ENCODE measurements at regions of chr17 and their contacts with region 1.

Region 1: GRCh38 chr17:38702166-38702899 is 2.7 kb upstream of the MLLT6 start:
- DNase-seq: peak; percentile 85
- ATAC-seq: peak; percentile 47
- H3K4me3 Mint-ChIP-seq: peak overlapping the region; percentile 87
- H3K27ac Mint-ChIP-seq: peak overlapping the region; percentile 97
- H3K4me1 Mint-ChIP-seq: peaks cover 52% of the 10 kb centered on the region
- H3K27me3 Mint-ChIP-seq: no peaks in the 10 kb centered on the region

Region 2: GRCh38 chr17:38717139-38717745 is 14.9 kb after region 1 on chr17:
- CTCF ChIA-PET with region 1: interaction called, 5 read pairs
- POLR2A ChIA-PET with region 1: interaction called, 11 read pairs
- DNase-seq: no peak
- ATAC-seq: no peak
- H3K4me3 Mint-ChIP-seq: no peak overlapping the region
- H3K27ac Mint-ChIP-seq: peak overlapping the region; percentile 48
- H3K4me1 Mint-ChIP-seq: peaks cover 17% of the 10 kb centered on the region
- H3K27me3 Mint-ChIP-seq: no peaks in the 10 kb centered on the region

Region 3: GRCh38 chr17:38800237-38800760 is 98.0 kb after region 1 on chr17:
- CTCF ChIA-PET with region 1: no interaction called
- POLR2A ChIA-PET with region 1: no interaction called
- DNase-seq: no peak
- ATAC-seq: no peak
- H3K4me3 Mint-ChIP-seq: peak overlapping the region; percentile 81
- H3K27ac Mint-ChIP-seq: peak overlapping the region; percentile 83
- H3K4me1 Mint-ChIP-seq: peaks cover 36% of the 10 kb centered on the region
- H3K27me3 Mint-ChIP-seq: no peaks in the 10 kb centered on the region

Region 4: GRCh38 chr17:38868817-38869525 is 166.6 kb after region 1 on chr17:
- CTCF ChIA-PET with region 1: no interaction called
- POLR2A ChIA-PET with region 1: no interaction called
- DNase-seq: peak; percentile 90
- ATAC-seq: peak; percentile 54
- H3K4me3 Mint-ChIP-seq: peak overlapping the region; percentile 99
- H3K27ac Mint-ChIP-seq: peak overlapping the region; percentile 85
- H3K4me1 Mint-ChIP-seq: peaks cover 42% of the 10 kb centered on the region
- H3K27me3 Mint-ChIP-seq: no peaks in the 10 kb centered on the region

Measured in activated CD8-positive, alpha-beta T cell treated with anti-CD3 and anti-CD28 coated beads, Interleukin-2, amount 10 ng/mL, durations not matched to agents 7 days and 5 days (primary cell).